HepG2 (cell line): ENCODE measurements at regions of chr1 and their contacts with region 1.

Region 1: DNA sequence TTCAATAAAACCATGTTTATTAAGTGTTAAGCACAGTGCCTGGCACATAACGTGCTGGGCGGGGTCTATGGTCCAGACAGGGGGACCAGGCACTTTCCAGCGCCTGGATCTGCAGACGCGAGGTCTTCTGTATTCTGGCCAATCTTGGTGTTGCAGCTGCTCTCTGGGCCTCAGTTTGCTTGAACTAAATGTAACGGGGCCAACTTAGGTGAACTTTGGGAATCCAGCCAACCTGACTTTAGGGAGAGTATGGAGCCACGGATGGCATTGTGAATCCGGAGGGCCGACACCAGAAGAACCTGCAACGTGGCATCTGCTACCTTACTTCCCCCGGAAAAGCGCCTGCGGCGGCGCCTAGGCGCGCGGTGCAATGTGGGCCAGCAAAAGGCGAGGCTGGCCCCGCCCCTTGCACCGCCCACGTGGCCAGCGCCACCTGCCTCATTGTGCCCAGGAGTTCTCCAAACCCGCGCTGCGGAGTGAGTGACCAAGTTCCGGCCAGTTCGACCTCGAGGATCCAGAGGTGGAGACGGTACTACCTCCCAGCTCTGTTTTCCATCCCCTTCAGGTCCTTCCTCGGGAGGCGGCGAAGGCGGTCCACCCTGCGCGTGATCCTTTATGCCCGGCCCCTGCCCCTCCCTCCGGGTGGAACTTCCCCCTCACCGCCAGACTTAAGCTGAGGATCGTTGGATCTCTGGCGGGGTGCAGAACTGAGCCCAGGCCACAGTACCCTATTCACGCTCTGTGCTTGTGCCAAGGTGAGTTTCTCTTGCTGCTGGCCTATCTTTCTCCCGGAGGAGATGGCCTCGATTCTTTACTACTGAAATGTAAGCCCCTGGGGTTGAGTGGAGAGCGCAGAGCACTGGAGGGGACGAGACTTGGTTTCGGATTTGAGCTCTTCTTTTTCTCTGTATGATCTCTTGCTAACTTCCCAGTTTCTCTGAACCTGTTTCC is at the start of gene AKR1A1:
- DNase-seq: peak; percentile 87
- ATAC-seq: peak; percentile 91
- H3K4me3 ChIP-seq: peak within 1 kb of the TSS; percentile 75 to 87 (median 82)
- H3K27ac ChIP-seq: peak within 1 kb of the TSS; percentile 92
- H3K4me1 ChIP-seq: peaks cover 48% of the 10 kb centered on the region
- H3K27me3 ChIP-seq: no peaks in the 10 kb centered on the region; a peak in 1 of 5 replicates
- CTCF ChIP-seq: peak; percentile 38; the same call in 1 of the 2 replicates
- EP300 ChIP-seq: no peak; a peak in 1 of 4 replicates
- POLR2A ChIP-seq: peak; percentile 93 to 97
- RAD21 ChIP-seq: peak; percentile 54
- total RNA-seq, gene AKR1A1: 217 and 233 TPM in 2 replicates

Region 2: DNA sequence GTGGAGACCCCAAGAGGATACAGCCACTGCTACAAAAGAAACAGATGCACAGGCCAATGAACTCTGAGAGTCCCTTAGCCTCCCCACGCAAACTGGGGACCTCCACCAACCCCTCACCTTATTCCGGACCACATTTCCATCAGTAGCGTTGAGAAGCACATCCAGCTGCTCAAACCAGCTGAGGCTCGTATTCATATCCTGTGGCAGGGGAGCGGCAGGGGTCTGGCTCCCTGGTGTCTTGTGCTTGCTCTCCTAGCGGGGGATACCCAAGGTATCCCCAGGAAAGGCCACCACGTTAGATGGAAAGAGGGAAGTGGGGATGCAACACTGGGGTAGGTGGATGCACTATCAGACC is 51.3 kb before region 1 on chr1:
- CTCF ChIA-PET with region 1: no interaction called
- POLR2A ChIA-PET with region 1: interaction called, 47 read pairs
- in situ Hi-C with region 1: no loop called
- intact Hi-C with region 1: no loop called
- DNase-seq: no peak
- ATAC-seq: no peak; the same call in 1 of the 3 replicates
- H3K4me3 ChIP-seq: peak overlapping the region; percentile 74 to 83 (median 77)
- H3K27ac ChIP-seq: peak overlapping the region; percentile 71
- H3K4me1 ChIP-seq: peaks cover 43% of the 10 kb centered on the region
- H3K27me3 ChIP-seq: no peaks in the 10 kb centered on the region; a peak in 1 of 5 replicates
- CTCF ChIP-seq: no peak
- EP300 ChIP-seq: no peak
- POLR2A ChIP-seq: no peak
- RAD21 ChIP-seq: no peak

Region 3: GRCh38 chr1:45512641-45513054 is 38.0 kb before region 1 on chr1:
- CTCF ChIA-PET with region 1: no interaction called
- POLR2A ChIA-PET with region 1: interaction called, 690 read pairs
- in situ Hi-C with region 1: no loop called
- intact Hi-C with region 1: no loop called
- DNase-seq: peak; percentile 76
- ATAC-seq: peak; percentile 40
- H3K4me3 ChIP-seq: no peak overlapping the region
- H3K27ac ChIP-seq: no peak overlapping the region
- H3K4me1 ChIP-seq: peaks cover 59% of the 10 kb centered on the region
- H3K27me3 ChIP-seq: no peaks in the 10 kb centered on the region
- CTCF ChIP-seq: peak; percentile 82
- EP300 ChIP-seq: no peak
- POLR2A ChIP-seq: peak in 1 of 2 experiments; percentile 64; a peak in 2 of 4 replicates
- RAD21 ChIP-seq: peak; percentile 77

Region 4: GRCh38 chr1:45535988-45536766 is 14.5 kb before region 1 on chr1:
- CTCF ChIA-PET with region 1: no interaction called
- POLR2A ChIA-PET with region 1: interaction called, 55 read pairs
- in situ Hi-C with region 1: no loop called
- intact Hi-C with region 1: no loop called
- DNase-seq: no peak
- ATAC-seq: peak; percentile 31; the same call in 2 of the 3 replicates
- H3K4me3 ChIP-seq: no peak overlapping the region
- H3K27ac ChIP-seq: no peak overlapping the region
- H3K4me1 ChIP-seq: peaks cover 37% of the 10 kb centered on the region
- H3K27me3 ChIP-seq: no peaks in the 10 kb centered on the region
- CTCF ChIP-seq: no peak
- EP300 ChIP-seq: no peak
- POLR2A ChIP-seq: no peak
- RAD21 ChIP-seq: no peak

Region 5: DNA sequence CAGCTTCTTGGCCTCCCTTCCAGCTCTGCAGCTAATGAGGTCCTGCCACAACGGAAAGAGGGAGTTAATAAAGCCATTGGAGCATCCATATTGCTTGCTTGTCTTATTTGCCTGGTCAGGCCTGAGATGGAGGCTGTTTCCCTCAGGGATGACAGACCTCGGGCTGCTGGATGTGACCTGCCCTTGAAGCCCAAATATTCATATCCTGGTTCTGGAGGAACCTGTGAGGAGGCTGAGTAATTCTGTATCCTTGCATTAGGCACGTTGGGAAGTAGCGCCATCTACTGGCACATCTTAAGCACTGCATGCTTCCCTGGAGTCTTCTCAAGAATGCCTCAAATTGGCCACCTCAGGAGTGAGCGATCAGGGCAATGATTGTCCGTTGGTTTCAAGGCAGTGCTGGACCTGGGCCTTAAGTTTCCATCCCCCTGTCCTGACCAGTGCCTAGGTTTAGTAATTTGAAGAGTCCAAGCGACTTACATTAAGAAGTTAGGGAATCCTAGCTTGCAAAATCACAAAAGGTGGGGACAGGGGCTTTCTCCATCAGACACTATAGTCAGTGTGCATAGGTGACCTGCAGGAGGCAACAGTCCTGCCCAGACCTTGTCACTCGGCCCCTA is 19.4 kb after region 1 on chr1:
- CTCF ChIA-PET with region 1: interaction called, 4 read pairs
- POLR2A ChIA-PET with region 1: interaction called, 9 read pairs
- in situ Hi-C with region 1: no loop called
- intact Hi-C with region 1: loop called (anchors 2 kb)
- DNase-seq: peak; percentile 65
- ATAC-seq: peak; percentile 81
- H3K4me3 ChIP-seq: no peak overlapping the region
- H3K27ac ChIP-seq: no peak overlapping the region
- H3K4me1 ChIP-seq: no peaks in the 10 kb centered on the region
- H3K27me3 ChIP-seq: no peaks in the 10 kb centered on the region
- CTCF ChIP-seq: peak; percentile 96
- EP300 ChIP-seq: no peak
- POLR2A ChIP-seq: peak in 1 of 2 experiments; percentile 29; a peak in 1 of 4 replicates
- RAD21 ChIP-seq: peak; percentile 87